ENCODE measurements at regions of chr22 and their contacts with region 1.

Region 1: GRCh38 chr22:19948057-19948760 is 6.6 kb upstream of the TXNRD2 start:
- DNase-seq: no peak
- ATAC-seq: no peak
- H3K4me3 Mint-ChIP-seq: no peak overlapping the region
- H3K27ac Mint-ChIP-seq: no peak overlapping the region
- H3K4me1 Mint-ChIP-seq: peaks cover 19% of the 10 kb centered on the region
- H3K27me3 Mint-ChIP-seq: no peaks in the 10 kb centered on the region
- CTCF ChIP-seq: no peak

Region 2: GRCh38 chr22:19962233-19962908 is 14.2 kb after region 1 on chr22:
- CTCF ChIA-PET with region 1: interaction called, 38 read pairs
- POLR2A ChIA-PET with region 1: interaction called, 4 read pairs
- DNase-seq: peak; percentile 91
- ATAC-seq: peak; percentile 65
- H3K4me3 Mint-ChIP-seq: peak overlapping the region; percentile 61
- H3K27ac Mint-ChIP-seq: peak overlapping the region; percentile 84
- H3K4me1 Mint-ChIP-seq: peaks cover 39% of the 10 kb centered on the region
- H3K27me3 Mint-ChIP-seq: no peaks in the 10 kb centered on the region; the same call in 1 of the 2 replicates
- CTCF ChIP-seq: peak; percentile 81

Measured in WTC11 (cell line).